Left cardiac atrium (tissue), 4 donors: ENCODE measurements at regions of chr11 and their contacts with region 1.

Region 1: DNA sequence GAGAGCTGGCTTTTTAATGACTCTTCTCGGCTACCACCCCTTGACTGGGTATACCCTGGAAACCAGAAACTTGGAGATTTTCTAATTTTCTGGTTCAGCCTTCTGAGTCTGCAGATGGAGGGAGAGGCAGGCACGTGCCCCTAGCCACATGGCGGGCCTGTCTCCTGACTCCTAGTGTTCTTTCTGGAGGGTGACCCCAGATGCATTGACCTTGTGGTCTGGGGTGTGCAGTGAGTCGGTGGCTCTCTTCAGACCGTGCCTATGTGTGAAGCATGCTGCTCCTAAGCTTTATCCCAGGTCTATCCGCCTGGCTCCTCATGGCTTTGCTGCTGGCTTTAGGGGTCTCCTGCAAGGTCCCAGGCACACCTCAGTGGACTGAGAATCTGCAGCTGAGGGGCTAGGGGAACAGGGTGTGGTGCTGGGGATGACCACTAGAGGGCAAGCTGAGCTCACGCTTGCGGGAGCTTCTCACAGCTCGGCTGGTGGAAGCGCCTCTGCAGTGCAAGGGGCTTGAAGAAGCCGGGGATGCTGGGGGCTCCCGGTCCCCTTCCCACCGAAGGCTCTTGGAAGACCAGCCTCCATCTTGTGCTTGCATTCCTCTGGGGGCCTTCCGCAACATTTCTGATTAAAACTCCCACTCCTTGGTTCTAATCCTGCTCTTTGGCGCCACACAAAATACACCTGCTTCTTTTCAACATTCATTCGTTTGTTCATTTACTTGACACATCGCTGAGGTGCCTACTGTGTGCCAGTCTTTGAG is 51.8 kb downstream of the OTOG start:
- DNase-seq: peak; percentile 78
- ATAC-seq: peak; percentile 82 to 87

Region 2: DNA sequence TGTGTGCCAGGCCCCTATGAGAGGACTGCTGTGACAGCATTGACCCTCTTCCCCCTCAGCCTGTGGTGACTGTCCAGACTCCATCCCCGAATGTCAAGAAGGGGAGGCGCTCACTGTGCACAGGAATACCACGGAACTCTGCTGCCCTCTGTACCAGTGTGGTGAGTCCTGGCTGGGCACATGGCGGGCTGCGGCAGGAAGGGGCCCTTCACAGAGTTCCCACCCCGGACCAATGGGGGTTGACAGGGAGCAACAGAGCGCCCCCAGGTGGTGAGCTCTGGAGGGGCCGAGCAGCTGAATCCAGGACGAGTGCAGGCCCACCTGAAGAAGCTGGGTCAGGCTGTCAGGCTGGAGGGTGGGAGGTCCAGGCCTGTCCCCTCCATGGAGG is 36.7 kb after region 1 on chr11:
- intact Hi-C with region 1: no loop called
- DNase-seq: no peak
- ATAC-seq: no peak

Region 3: GRCh38 chr11:17722000-17722643 is 123.2 kb after region 1 on chr11:
- intact Hi-C with region 1: loop called in 1 of 2 experiments (anchors 2 kb)
- DNase-seq: no peak
- ATAC-seq: peak in 1 of 2 donors; percentile 29

Region 4: GRCh38 chr11:17730608-17731462 is 132.0 kb after region 1 on chr11:
- intact Hi-C with region 1: loop called in 1 of 2 experiments (anchors 5 kb)
- DNase-seq: peak; percentile 80
- ATAC-seq: peak; percentile 82 to 88